Transverse colon (tissue), 4 donors: ENCODE measurements at regions of chr19 and their contacts with region 1.

Region 1: DNA sequence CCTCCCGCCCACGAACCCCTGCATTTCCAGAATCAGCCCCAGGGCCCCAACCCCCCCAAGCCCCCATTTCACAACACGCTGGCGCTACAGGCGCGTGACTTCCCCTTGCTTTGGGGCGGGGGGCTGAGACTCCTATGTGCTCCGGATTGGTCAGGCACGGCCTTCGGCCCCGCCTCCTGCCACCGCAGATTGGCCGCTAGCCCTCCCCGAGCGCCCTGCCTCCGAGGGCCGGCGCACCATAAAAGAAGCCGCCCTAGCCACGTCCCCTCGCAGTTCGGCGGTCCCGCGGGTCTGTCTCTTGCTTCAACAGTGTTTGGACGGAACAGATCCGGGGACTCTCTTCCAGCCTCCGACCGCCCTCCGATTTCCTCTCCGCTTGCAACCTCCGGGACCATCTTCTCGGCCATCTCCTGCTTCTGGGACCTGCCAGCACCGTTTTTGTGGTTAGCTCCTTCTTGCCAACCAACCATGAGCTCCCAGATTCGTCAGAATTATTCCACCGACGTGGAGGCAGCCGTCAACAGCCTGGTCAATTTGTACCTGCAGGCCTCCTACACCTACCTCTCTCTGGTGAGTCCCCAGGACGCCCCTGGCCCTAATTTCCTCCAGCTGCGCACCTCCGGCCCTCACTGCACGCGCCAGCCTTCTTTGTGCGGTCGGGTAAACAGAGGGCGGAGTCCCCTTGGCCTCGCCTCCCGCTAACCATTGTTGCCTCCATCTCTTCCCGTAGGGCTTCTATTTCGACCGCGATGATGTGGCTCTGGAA is at the start of gene FTL:
- DNase-seq: peak; percentile 98
- H3K4me3 ChIP-seq: peak within 1 kb of the TSS; percentile 81 to 99 (median 86)
- H3K27ac ChIP-seq: peak within 1 kb of the TSS; percentile 94 to 97 (median 96)
- H3K4me1 ChIP-seq: peaks cover 34 to 67% (median 61%) of the 10 kb centered on the region in 4 donors
- H3K27me3 ChIP-seq: no peaks in the 10 kb centered on the region
- CTCF ChIP-seq: no peak
- EP300 ChIP-seq: no peak
- POLR2A ChIP-seq: peak; percentile 100
- total RNA-seq, gene FTL: 3,057 to 3,935 (median 3,837) TPM

Region 2: DNA sequence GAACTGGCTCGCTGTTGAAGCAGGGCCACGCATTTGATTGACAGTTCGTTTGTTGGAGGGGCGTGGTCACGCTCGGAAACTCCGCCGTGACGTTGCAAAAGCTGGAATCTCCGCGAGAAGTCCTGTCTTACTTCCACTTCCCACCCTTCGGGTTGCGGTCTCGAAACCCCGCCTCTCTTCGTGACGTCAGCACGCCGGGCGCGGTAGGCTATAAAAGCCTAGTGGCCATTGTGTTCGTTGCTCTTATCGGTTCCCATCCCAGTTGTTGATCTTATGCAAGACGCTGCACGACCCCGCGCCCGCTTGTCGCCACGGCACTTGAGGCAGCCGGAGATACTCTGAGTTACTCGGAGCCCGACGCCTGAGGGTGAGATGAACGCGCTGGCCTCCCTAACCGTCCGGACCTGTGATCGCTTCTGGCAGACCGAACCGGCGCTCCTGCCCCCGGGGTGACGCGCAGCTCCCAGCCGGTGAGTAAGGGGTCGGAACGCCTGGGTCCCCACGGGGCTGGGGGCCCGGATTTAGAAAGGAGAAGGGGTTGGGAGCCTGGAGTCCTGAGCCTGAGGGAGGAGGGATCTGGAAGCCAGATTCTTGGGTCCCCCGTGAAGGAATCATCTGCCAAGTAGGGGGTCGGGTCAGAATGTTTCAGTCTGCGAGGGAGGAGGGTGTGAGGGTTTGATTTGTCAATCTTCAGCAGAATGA is 92.9 kb before region 1 on chr19 and contains the start of gene PPP1R15A:
- in situ Hi-C with region 1: loop called in 1 of 4 experiments (anchors 25 kb)
- intact Hi-C with region 1: loop called (anchors 10 kb)
- DNase-seq: peak; percentile 99
- H3K4me3 ChIP-seq: peak within 1 kb of the TSS; percentile 75 to 98 (median 88)
- H3K27ac ChIP-seq: peak within 1 kb of the TSS; percentile 100
- H3K4me1 ChIP-seq: peaks cover 24 to 60% (median 47%) of the 10 kb centered on the region in 4 donors
- H3K27me3 ChIP-seq: no peaks in the 10 kb centered on the region
- CTCF ChIP-seq: peak in 2 of 5 experiments; percentile 54 to 64
- EP300 ChIP-seq: peak; percentile 68
- POLR2A ChIP-seq: peak; percentile 100
- total RNA-seq, gene PPP1R15A: 49.4 to 109 (median 69.5) TPM

Region 3: DNA sequence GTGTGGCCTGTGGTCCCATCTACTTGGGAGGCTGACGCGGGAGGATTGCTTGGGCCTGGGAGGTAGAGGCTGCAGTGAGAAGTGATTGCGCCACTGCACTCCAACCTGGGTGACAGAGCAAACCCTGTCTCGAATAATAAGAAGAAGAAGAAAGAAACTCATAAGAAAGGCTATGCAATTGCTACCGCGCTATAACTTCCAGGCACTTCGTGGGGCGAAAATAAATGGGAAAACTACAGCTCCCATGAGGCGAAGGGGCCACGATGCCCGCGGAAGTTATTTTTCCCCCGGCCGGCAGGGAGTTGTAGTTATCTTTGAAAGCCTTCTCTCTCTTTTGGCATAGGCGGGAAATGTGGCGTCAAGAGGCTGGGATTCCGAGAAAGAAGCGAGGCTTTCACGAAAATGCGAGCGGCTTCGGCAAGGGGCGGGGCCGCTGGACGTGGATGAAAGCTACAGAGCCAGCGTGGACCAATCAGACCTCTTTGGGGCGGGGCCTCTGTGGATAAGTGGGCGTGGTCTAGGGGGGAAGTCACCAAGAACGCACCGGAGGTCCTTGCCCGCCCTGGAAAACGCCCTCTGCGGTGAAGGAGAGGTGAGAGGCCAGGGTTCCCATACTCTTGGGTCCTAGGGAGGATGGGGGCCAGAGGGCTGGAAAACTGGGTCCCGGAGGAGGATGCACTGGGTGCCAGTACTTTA is 65.3 kb before region 1 on chr19 and contains the start of gene NUCB1:
- in situ Hi-C with region 1: no loop called
- intact Hi-C with region 1: loop called (anchors 10 kb)
- DNase-seq: peak; percentile 99
- H3K4me3 ChIP-seq: peak within 1 kb of the TSS; percentile 64 to 99 (median 84)
- H3K27ac ChIP-seq: peak within 1 kb of the TSS; percentile 87 to 98 (median 93)
- H3K4me1 ChIP-seq: peaks cover 18 to 39% (median 22%) of the 10 kb centered on the region in 4 donors
- H3K27me3 ChIP-seq: no peaks in the 10 kb centered on the region
- CTCF ChIP-seq: peak in 3 of 5 experiments; percentile 16 to 53 (median 28)
- EP300 ChIP-seq: peak; percentile 89
- POLR2A ChIP-seq: peak; percentile 73
- total RNA-seq, gene NUCB1: 135 to 196 (median 174) TPM